PC-3 (cell line): ENCODE measurements at regions of chrX and their contacts with region 1.

Region 1: GRCh38 chrX:104270920-104271512 is 16.3 kb upstream of the ESX1 start:
- DNase-seq: peak; percentile 82
- ATAC-seq: peak; percentile 65
- H3K4me3 ChIP-seq: peak overlapping the region; percentile 15; the same call in 1 of the 2 replicates
- H3K27ac ChIP-seq: no peak overlapping the region
- H3K4me1 ChIP-seq: no peaks in the 10 kb centered on the region
- H3K27me3 ChIP-seq: no peaks in the 10 kb centered on the region
- CTCF ChIP-seq: peak; percentile 86

Region 2: DNA sequence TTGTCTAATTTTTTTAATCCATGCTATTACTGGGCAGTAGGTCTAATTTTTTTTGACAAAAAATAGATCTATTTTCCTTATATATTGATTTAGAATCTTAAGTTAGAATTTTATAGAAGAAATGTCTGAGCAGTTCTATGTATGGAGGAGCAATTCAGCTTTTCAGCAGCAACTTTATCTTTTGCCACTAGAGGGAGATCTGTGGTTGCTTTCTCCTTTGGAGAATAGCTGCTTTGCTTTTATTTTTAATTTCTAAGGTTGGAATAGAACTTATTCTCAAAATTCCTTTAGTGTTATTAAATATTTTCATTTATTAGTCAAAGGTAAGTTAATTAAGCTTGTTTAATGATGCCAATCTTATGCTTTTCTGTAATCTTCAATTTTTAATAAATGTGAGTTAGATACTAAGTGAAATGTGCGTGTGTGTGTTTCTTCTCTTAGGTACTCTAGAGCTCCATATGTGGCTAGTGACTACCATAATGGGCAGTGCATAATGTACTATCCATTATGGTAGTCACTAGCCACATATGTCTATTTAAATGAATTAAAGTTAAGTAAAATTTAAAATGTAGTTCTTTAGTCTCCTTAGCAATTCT is 75.4 kb before region 1 on chrX:
- CTCF ChIA-PET with region 1: interaction called, 5 read pairs
- POLR2A ChIA-PET with region 1: no interaction called
- intact Hi-C with region 1: loop called (anchors 1 kb)
- DNase-seq: peak; percentile 70
- ATAC-seq: peak; percentile 56; the same call in 1 of the 2 replicates
- H3K4me3 ChIP-seq: no peak overlapping the region
- H3K27ac ChIP-seq: no peak overlapping the region
- H3K4me1 ChIP-seq: no peaks in the 10 kb centered on the region
- H3K27me3 ChIP-seq: no peaks in the 10 kb centered on the region
- CTCF ChIP-seq: peak; percentile 74